ENCODE measurements at regions of chr22 and their contacts with region 1.

Region 1: GRCh38 chr22:21778705-21779363 is 43.2 kb upstream of the YPEL1 start:
- DNase-seq: peak; percentile 13
- H3K4me3 ChIP-seq: no peak overlapping the region
- H3K27ac ChIP-seq: no peak overlapping the region
- H3K4me1 ChIP-seq: peaks cover 4% of the 10 kb centered on the region
- H3K27me3 ChIP-seq: no peaks in the 10 kb centered on the region
- CTCF ChIP-seq: no peak
- POLR2A ChIP-seq: no peak

Region 2: DNA sequence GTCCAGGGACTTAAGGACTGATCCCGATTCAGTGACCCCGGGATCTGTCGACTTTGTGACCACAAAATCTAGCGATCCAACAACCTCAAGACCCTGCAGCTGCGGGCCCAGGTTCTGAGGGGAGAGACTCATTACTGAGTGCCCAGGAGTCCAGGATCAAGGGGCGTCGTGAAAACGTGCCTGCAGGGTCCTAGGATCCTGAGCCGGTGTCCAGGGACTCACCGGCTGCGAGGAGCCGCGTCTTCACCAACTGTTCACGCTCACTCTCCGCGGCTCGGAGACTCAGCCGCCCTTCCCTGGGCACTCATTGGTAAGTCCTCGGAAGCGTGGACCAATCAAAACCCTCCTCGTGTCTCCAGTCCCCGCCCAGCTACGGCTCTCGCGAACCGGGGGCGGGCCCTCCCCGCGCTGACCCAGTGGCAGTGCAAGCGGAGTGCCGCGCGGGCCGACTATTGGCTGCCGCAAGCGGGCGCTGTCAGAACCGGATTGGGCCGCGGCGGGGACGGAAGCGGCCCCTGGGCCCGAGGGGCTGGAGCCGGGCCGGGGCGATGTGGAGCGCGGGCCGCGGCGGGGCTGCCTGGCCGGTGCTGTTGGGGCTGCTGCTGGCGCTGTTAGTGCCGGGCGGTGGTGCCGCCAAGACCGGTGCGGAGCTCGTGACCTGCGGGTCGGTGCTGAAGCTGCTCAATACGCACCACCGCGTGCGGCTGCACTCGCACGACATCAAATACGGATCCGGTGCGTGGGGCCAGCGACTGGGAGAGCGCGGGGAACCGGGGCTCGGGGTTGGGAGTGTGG is 136.8 kb before region 1 on chr22 and contains the start of gene SDF2L1:
- intact Hi-C with region 1: no loop called
- DNase-seq: peak; percentile 99
- H3K4me3 ChIP-seq: peak within 1 kb of the TSS; percentile 63 to 66
- H3K27ac ChIP-seq: peak within 1 kb of the TSS in 1 of 2 donors; percentile 8
- H3K4me1 ChIP-seq: peaks cover 4% of the 10 kb centered on the region
- H3K27me3 ChIP-seq: no peaks in the 10 kb centered on the region
- CTCF ChIP-seq: peak in 2 of 3 experiments; percentile 32 to 42
- POLR2A ChIP-seq: no peak
- total RNA-seq, gene SDF2L1: 33.0 to 34.3 TPM

Region 3: DNA sequence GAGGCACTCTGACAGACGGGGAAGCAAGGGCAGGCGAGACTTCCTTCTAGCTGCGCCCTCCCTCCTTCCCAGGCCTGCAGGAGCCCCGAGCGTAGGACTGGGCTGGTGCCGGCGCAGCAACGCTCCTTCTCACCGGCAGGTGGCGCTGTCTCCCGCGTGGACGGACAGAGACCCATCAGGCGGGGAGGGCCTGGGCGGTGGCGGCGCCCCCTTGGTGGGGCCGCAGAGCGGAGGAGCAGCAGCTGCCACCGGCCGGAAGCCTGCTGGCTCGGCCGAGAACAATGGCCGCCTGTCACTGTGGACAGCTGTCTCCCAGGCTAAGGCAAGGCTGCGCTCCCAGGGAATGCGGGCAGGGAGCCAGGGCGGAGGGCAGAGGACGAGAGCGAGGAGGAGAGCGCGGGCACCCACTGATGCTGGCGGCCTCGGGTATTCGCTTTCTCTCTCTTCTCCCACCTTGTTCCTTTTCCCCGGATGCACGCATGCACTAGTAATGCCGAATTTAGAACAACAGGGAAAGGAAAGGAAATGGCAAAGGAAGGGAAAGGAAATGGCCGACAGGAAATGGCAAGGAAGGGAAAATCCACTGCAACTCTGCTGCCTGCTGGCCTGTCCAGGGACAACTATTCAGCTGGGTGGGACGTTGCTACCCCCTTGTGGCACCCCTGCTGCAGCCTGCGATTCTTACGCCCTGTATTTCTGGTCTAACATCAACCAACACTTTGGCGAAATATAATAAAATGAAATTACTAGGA is 159.4 kb after region 1 on chr22:
- intact Hi-C with region 1: loop called (anchors 10 kb)
- DNase-seq: peak; percentile 96
- H3K4me3 ChIP-seq: peak overlapping the region; percentile 64 to 69
- H3K27ac ChIP-seq: peak overlapping the region; percentile 89 to 95
- H3K4me1 ChIP-seq: peaks cover 21% of the 10 kb centered on the region
- H3K27me3 ChIP-seq: no peaks in the 10 kb centered on the region
- CTCF ChIP-seq: peak; percentile 99
- POLR2A ChIP-seq: no peak